ENCODE measurements at regions of chr9 and their contacts with region 1.

Region 1: DNA sequence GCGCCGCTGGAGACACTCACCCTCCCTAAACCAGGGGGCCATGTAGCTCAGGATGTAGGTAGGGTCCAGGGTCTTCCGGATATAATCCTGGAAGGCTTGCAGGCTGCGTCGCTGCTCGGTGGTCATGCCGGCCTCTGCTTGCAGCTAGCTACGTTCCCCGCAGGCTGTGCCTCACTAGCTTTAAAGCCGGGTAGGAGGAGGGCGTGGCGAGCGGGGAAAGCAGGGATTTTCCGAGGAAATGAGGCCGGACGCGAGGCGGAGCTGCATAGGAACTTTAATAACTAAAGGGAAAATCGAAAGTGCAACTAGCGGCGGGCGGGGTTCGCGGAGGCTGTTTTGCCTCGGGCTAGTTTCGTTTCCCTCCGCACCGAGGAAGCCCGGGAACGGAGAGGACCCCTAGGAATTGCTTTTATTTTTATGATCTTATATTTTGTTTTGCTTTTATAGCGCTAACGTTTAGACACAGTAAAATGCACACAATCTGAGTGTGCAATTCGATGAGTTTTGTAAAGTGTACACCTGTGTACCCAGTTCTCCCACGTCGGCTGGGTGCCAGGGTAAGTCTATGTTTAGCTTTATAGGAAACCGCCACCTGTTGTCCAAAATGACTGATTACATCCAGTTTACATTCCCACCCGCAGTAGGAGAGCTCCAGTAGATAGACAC is at the start of gene RIGI:
- DNase-seq: peak; percentile 97
- ATAC-seq: peak; percentile 96
- total RNA-seq, gene RIGI: 4.7 TPM

Region 2: GRCh38 chr9:32384364-32385151 is 141.6 kb before region 1 on chr9 and contains the start of gene ACO1:
- intact Hi-C with region 1: loop called (anchors 2 kb)
- DNase-seq: peak; percentile 95
- ATAC-seq: peak; percentile 99
- total RNA-seq, gene ACO1: 59.5 TPM

Region 3: DNA sequence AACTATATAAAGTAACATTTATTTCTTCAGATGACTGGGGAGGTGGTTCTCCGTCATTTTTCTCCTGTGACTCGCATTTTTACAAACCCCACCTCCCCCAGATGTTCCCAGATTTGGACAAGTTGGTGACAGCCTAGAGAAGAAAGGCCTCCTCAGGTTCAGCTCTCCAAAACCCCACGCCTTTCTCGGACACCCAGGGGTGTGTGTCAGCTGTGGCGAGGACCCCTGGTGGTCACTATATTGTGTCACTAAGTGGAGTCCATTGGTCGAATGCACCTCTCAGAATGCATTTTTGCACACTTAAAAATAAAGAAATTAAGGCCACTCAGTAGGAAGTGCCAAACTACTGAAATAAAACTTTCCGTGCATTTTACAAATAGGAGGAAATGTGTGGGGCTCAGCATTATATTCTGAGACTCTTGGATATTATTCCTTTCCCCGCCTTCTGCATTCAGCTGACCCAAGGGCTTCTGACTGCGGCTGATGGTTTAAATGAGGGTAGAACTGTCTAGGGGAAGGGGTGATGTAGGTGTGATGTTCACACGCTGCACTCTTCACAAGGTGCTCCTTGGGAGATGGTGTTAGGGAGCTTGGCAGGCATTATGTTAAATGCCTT is 94.1 kb before region 1 on chr9:
- intact Hi-C with region 1: loop called (anchors 10 kb)
- DNase-seq: no peak
- ATAC-seq: no peak

Region 4: DNA sequence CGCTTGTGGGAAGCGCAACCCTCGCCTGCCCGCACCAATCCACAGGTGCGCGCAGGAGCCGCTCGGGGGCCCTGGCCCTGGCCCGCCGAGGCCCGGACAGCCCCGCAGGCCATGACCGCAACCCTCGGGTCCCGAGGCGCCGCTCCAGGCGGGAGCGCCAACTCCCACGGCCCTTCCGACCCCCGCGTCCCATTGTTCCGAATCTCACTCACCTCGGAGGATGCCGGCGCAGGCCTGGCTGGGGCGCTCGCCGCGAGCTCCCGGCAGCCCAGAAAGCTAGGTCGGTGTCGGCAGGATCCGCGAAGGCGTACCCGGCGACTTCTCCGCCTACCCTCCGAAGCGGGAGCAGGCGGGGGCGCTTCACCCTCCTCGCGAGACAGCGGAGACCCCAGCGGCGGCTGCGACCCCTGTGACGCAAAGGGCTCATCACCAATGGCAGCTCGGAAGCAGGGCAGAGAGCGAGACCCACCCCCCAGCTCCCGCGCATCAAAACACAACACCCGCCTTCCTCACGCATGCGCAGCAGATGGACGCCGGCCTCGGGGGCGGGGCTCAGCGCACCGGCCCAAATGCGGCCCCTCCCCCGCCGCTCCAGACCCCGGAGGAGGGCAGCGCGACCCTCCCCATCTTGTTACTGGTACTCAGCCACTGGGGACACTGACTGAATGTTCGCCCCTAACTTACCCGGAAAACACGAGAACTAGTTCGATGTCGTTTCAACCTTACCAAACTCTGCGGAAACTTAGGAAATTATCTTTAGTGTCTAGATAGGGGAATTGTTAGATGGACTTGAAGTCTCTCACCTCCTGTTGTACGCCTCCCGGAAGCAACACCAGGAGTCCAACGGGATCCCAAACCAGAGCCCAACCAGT is 24.6 kb after region 1 on chr9:
- intact Hi-C with region 1: loop called (anchors 2 kb)
- DNase-seq: peak; percentile 96
- ATAC-seq: peak; percentile 87

Region 5: GRCh38 chr9:32571969-32572899 is 46.1 kb after region 1 on chr9:
- intact Hi-C with region 1: loop called (anchors 2 kb)
- DNase-seq: peak; percentile 67
- ATAC-seq: peak; percentile 91